Colonic mucosa (tissue), 4 donors: ENCODE measurements at regions of chr2 and their contacts with region 1.

Region 1: DNA sequence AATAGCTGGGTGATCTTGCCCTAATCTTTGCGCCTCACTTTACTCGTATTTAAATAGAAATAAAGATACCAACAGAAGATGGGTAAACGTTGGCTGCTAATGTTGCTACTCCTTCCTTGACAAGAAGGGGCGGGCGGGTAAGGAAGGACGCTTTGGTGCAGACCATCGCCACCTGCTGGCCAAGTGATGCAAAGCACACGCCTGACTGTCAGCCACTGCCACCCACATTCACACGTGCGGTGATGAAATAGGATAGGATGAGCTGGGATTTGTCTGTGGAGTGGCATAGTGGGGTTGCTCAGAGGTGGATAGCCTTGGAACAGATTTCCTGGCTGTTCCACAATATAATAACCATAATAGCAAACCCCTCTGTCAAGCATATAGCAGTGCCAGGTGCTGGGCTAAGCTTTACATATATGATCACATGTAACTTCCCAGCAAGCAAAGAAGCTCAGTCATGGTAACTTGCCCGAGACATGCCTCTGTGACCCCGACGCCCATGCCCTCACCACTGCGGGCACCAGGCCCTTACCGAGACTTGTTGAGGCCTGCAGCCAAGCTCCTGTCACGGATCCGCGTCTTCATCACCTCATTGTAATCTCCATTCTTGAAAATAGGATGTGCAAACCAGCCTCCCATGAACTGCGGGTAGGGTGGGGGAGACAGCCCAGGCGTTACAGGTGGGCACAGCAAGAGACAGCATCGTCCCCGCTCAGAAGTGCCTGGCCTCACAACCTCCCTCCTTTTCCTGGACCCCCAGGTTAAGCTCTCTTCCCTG is 39.3 kb downstream of the LCT start:
- DNase-seq: peak; percentile 73
- H3K4me3 ChIP-seq: no peak overlapping the region
- H3K27ac ChIP-seq: no peak overlapping the region
- H3K4me1 ChIP-seq: no peaks in the 10 kb centered on the region
- H3K27me3 ChIP-seq: no peaks in the 10 kb centered on the region
- CTCF ChIP-seq: peak; percentile 88

Region 2: GRCh38 chr2:135004005-135004746 is 793.5 kb before region 1 on chr2:
- intact Hi-C with region 1: loop called (anchors 10 kb)
- DNase-seq: peak; percentile 73
- H3K4me3 ChIP-seq: no peak overlapping the region
- H3K27ac ChIP-seq: no peak overlapping the region
- H3K4me1 ChIP-seq: no peaks in the 10 kb centered on the region
- H3K27me3 ChIP-seq: no peaks in the 10 kb centered on the region
- CTCF ChIP-seq: peak; percentile 82

Region 3: DNA sequence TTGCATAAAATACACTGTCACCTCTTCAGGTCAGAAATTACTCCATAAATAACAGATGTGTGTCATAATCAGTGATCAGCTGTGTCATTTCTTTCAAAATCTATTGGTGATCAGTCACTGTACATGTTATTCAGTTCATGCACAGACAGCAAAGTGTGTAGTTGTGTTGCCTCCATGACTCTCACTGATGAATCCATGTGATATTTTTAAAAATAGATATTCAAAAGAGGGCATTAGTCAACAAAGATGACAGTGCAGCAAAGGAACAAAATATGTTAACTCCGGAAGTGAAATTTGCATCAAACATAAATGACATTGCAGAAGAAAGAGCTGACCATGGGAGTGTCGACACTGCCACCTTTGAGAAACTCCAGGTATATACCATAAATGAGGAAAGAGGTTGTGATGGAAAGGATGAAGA is 95.7 kb after region 1 on chr2:
- intact Hi-C with region 1: no loop called
- DNase-seq: no peak
- H3K4me3 ChIP-seq: no peak overlapping the region
- H3K27ac ChIP-seq: no peak overlapping the region
- H3K4me1 ChIP-seq: no peaks in the 10 kb centered on the region
- H3K27me3 ChIP-seq: no peaks in the 10 kb centered on the region
- CTCF ChIP-seq: no peak